Esophagus squamous epithelium (tissue), 5 donors: ENCODE measurements at regions of chr5 and their contacts with region 1.

Region 1: DNA sequence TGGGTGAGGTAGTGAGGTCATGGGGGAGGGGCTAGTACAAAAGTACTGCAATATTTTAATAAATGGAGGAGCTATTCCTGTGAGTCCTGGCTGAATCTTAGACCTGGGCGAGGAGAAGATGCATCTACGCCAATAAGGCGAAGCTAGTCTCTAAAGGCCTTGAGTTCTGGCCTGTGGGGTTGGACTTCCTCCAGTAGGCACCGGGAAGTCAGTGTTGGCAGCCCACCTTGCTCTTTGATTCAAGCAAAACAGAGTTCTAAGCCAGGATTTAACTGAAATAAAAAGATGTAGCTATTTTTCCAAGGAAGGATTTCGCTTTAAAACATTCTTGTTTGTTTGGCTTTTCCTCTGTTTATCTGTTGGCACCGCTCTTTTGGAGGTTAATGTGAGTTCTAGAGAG is 244.6 kb downstream of the KIF4B start:
- DNase-seq: no peak
- H3K4me3 ChIP-seq: no peak overlapping the region
- H3K27ac ChIP-seq: no peak overlapping the region
- H3K4me1 ChIP-seq: peaks cover 0 to 41% (median 0%) of the 10 kb centered on the region in 3 donors
- H3K27me3 ChIP-seq: no peaks in the 10 kb centered on the region
- CTCF ChIP-seq: no peak
- POLR2A ChIP-seq: no peak

Region 2: GRCh38 chr5:155064580-155064979 is 193.6 kb before region 1 on chr5:
- intact Hi-C with region 1: no loop called
- DNase-seq: no peak
- H3K4me3 ChIP-seq: no peak overlapping the region
- H3K27ac ChIP-seq: no peak overlapping the region
- H3K4me1 ChIP-seq: no peaks in the 10 kb centered on the region
- H3K27me3 ChIP-seq: peaks cover 0 to 9% (median 0%) of the 10 kb centered on the region in 4 donors
- CTCF ChIP-seq: no peak
- POLR2A ChIP-seq: no peak

Region 3: GRCh38 chr5:155147222-155147621 is 110.9 kb before region 1 on chr5:
- intact Hi-C with region 1: loop called (anchors 10 kb)
- DNase-seq: no peak
- H3K4me3 ChIP-seq: no peak overlapping the region
- H3K27ac ChIP-seq: no peak overlapping the region
- H3K4me1 ChIP-seq: no peaks in the 10 kb centered on the region
- H3K27me3 ChIP-seq: no peaks in the 10 kb centered on the region
- CTCF ChIP-seq: peak in 1 of 6 experiments; percentile 13
- POLR2A ChIP-seq: no peak